ENCODE measurements at regions of chr21 and their contacts with region 1.

Region 1: GRCh38 chr21:25911730-25912401 is 177.1 kb downstream of the GABPA start:
- DNase-seq: no peak
- H3K4me3 ChIP-seq: no peak overlapping the region
- CTCF ChIP-seq: no peak

Region 2: GRCh38 chr21:25870084-25870483 is 41.8 kb before region 1 on chr21:
- CTCF ChIA-PET with region 1: no interaction called
- POLR2A ChIA-PET with region 1: no interaction called
- DNase-seq: no peak
- H3K4me3 ChIP-seq: no peak overlapping the region
- CTCF ChIP-seq: no peak

Region 3: GRCh38 chr21:25895565-25896205 is 16.2 kb before region 1 on chr21:
- CTCF ChIA-PET with region 1: interaction called, 28 read pairs
- POLR2A ChIA-PET with region 1: no interaction called
- DNase-seq: no peak
- H3K4me3 ChIP-seq: no peak overlapping the region
- CTCF ChIP-seq: peak; percentile 27

Measured in AG04449 (cell line).